ENCODE measurements at regions of chr20 and their contacts with region 1.

Region 1: GRCh38 chr20:59222253-59223181 is 58.9 kb downstream of the ZNF831 start:
- DNase-seq: peak; percentile 87
- ATAC-seq: peak; percentile 96
- H3K4me3 ChIP-seq: peak overlapping the region; percentile 58
- H3K27ac ChIP-seq: no peak overlapping the region
- H3K4me1 ChIP-seq: peaks cover 18% of the 10 kb centered on the region
- H3K27me3 ChIP-seq: peaks cover 35% of the 10 kb centered on the region
- CTCF ChIP-seq: peak; percentile 95

Region 2: GRCh38 chr20:58716644-58717510 is 505.6 kb before region 1 on chr20:
- intact Hi-C with region 1: no loop called
- DNase-seq: no peak
- ATAC-seq: no peak
- H3K4me3 ChIP-seq: no peak overlapping the region
- H3K27ac ChIP-seq: no peak overlapping the region
- H3K4me1 ChIP-seq: no peaks in the 10 kb centered on the region
- H3K27me3 ChIP-seq: peaks cover 13% of the 10 kb centered on the region
- CTCF ChIP-seq: no peak

Region 3: GRCh38 chr20:58870239-58871014 is 352.1 kb before region 1 on chr20:
- intact Hi-C with region 1: loop called (anchors 10 kb)
- DNase-seq: peak; percentile 78
- ATAC-seq: peak; percentile 95
- H3K4me3 ChIP-seq: no peak overlapping the region
- H3K27ac ChIP-seq: no peak overlapping the region
- H3K4me1 ChIP-seq: no peaks in the 10 kb centered on the region
- H3K27me3 ChIP-seq: peaks cover 7% of the 10 kb centered on the region
- CTCF ChIP-seq: peak; percentile 93

Region 4: GRCh38 chr20:59087829-59088433 is 134.6 kb before region 1 on chr20:
- intact Hi-C with region 1: loop called (anchors 5 kb)
- DNase-seq: peak; percentile 89
- ATAC-seq: peak; percentile 96
- H3K4me3 ChIP-seq: no peak overlapping the region
- H3K27ac ChIP-seq: no peak overlapping the region
- H3K4me1 ChIP-seq: no peaks in the 10 kb centered on the region
- H3K27me3 ChIP-seq: no peaks in the 10 kb centered on the region
- CTCF ChIP-seq: peak; percentile 98

Region 5: DNA sequence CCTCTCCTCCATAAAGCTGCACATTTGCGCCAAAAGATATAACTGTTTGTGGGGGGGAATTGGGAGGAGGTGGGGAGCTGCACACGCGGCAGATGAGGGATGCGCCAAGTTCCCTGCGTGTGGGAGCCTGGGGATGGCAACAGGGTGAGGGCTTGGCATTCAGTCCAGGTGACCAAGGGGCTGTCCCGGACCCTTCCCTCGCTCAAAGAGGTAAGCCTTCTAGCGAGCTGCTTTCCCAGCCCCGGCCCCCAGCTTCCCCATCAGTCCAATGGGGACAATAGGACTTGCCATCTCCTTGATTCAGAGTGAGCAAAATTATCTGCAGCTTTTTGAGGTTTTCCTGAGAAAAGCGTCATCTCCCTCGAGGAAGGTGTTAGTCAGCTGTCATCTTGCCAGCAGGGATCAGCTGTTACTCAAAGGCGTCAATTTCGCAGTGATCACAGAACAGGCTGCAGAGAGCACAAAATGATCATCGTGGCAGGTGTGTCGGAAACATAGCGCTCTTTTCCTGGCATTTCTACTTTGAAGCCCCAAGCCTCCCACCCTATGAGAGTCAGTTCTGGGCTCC is 37.6 kb before region 1 on chr20:
- intact Hi-C with region 1: no loop called
- DNase-seq: no peak
- ATAC-seq: no peak
- H3K4me3 ChIP-seq: no peak overlapping the region
- H3K27ac ChIP-seq: no peak overlapping the region
- H3K4me1 ChIP-seq: no peaks in the 10 kb centered on the region
- H3K27me3 ChIP-seq: no peaks in the 10 kb centered on the region
- CTCF ChIP-seq: no peak

Region 6: GRCh38 chr20:59314811-59315391 is 92.4 kb after region 1 on chr20:
- intact Hi-C with region 1: no loop called
- DNase-seq: no peak
- ATAC-seq: no peak
- H3K4me3 ChIP-seq: no peak overlapping the region
- H3K27ac ChIP-seq: no peak overlapping the region
- H3K4me1 ChIP-seq: no peaks in the 10 kb centered on the region
- H3K27me3 ChIP-seq: peaks cover 8% of the 10 kb centered on the region
- CTCF ChIP-seq: no peak

Region 7: GRCh38 chr20:59341805-59342634 is 119.5 kb after region 1 on chr20:
- intact Hi-C with region 1: no loop called
- DNase-seq: no peak
- ATAC-seq: no peak
- H3K4me3 ChIP-seq: no peak overlapping the region
- H3K27ac ChIP-seq: no peak overlapping the region
- H3K4me1 ChIP-seq: no peaks in the 10 kb centered on the region
- H3K27me3 ChIP-seq: no peaks in the 10 kb centered on the region
- CTCF ChIP-seq: no peak